ENCODE measurements at regions of chr5 and their contacts with region 1.

Region 1: DNA sequence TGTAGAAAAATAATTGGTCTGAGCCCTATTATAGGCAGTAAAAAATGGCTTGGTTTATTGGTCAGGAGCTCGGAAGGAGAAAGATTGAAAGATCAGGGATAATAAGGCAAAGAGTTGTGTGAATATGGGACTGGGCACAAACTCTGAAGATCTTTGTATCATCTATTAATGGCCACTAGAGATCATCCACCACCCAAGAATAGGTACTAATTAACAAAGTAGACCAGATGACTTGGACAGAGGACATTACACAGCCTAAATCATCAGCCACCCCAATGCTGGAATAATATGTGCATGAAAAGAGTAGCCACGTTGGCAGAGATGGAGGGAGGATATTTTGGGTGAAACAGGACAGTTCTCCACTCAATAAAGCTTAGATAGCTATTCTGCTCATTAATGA is 364.1 kb downstream of the EFNA5 start:
- DNase-seq: no peak
- H3K4me3 ChIP-seq: no peak overlapping the region
- H3K27ac ChIP-seq: no peak overlapping the region
- H3K4me1 ChIP-seq: no peaks in the 10 kb centered on the region
- H3K27me3 ChIP-seq: no peaks in the 10 kb centered on the region
- CTCF ChIP-seq: peak in 1 of 2 donors; percentile 6

Region 2: DNA sequence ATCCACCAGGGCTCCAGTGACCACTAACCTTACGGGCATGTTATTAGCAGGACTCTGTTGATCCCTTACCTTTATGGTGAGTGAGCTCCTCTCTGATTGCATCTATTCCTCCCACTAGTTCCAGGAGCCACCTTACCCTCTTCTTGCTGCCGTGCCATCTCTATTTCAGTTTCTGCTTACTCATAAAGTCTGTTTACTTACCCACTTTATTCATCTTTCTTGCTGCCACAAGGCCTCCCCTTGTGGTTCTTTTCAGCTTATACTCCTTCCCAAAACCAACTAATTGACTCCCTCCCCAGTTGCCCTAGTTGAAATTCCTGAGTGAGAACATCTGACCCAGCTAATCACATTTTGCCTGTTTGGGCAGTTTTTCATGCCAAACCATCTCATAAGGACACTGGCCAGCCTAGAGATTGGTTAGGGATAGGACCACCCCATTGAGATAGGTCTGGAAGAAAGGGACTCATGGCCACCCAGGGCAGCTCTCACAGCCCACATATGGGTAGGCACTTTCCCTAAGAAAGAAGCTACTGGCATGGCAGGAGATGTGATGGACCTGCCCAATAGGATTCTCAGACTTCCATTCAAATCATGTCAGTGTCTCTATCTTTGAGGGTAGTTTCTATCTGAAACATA is 48.6 kb before region 1 on chr5:
- CTCF ChIA-PET with region 1: no interaction called
- dilution Hi-C with region 1: no loop called
- in situ Hi-C with region 1: no loop called
- intact Hi-C with region 1: no loop called
- DNase-seq: peak; percentile 73
- H3K4me3 ChIP-seq: no peak overlapping the region
- H3K27ac ChIP-seq: no peak overlapping the region
- H3K4me1 ChIP-seq: no peaks in the 10 kb centered on the region
- H3K27me3 ChIP-seq: no peaks in the 10 kb centered on the region
- CTCF ChIP-seq: no peak

Region 3: GRCh38 chr5:107373549-107374263 is 67.1 kb after region 1 on chr5:
- CTCF ChIA-PET with region 1: no interaction called
- dilution Hi-C with region 1: no loop called
- in situ Hi-C with region 1: no loop called
- intact Hi-C with region 1: loop called (anchors 5 kb)
- DNase-seq: no peak
- H3K4me3 ChIP-seq: no peak overlapping the region
- H3K27ac ChIP-seq: no peak overlapping the region
- H3K4me1 ChIP-seq: peaks cover 24% of the 10 kb centered on the region
- H3K27me3 ChIP-seq: no peaks in the 10 kb centered on the region
- CTCF ChIP-seq: no peak

Region 4: DNA sequence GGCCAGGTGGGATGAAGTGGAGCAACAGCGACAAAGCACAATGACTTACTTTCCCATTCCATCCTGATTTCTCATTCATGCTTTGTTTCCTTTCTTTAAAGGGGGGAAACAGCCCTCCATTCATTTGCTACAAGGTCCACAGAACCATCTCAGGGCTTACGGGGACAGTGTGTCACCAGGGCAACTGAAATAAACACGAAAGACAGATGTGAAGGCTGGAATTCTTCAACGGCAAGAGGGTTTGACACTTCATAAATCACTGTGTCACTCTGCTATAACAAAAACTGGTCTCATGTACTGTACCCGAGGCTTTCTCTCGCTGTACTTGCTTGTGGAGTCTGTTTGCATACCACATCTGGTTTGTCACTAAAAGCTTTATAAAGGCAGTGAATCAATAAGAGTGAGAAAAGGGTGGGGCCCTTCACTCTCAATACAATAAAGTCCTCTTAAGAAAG is 213.3 kb after region 1 on chr5:
- CTCF ChIA-PET with region 1: no interaction called
- dilution Hi-C with region 1: no loop called
- in situ Hi-C with region 1: no loop called
- intact Hi-C with region 1: no loop called
- DNase-seq: peak; percentile 29
- H3K4me3 ChIP-seq: no peak overlapping the region
- H3K27ac ChIP-seq: no peak overlapping the region
- H3K4me1 ChIP-seq: peaks cover 29% of the 10 kb centered on the region
- H3K27me3 ChIP-seq: no peaks in the 10 kb centered on the region
- CTCF ChIP-seq: no peak

Measured in mammary epithelial cell (primary cell).